MCF 10A (cell line): ENCODE measurements at regions of chr11 and their contacts with region 1.

Region 1: DNA sequence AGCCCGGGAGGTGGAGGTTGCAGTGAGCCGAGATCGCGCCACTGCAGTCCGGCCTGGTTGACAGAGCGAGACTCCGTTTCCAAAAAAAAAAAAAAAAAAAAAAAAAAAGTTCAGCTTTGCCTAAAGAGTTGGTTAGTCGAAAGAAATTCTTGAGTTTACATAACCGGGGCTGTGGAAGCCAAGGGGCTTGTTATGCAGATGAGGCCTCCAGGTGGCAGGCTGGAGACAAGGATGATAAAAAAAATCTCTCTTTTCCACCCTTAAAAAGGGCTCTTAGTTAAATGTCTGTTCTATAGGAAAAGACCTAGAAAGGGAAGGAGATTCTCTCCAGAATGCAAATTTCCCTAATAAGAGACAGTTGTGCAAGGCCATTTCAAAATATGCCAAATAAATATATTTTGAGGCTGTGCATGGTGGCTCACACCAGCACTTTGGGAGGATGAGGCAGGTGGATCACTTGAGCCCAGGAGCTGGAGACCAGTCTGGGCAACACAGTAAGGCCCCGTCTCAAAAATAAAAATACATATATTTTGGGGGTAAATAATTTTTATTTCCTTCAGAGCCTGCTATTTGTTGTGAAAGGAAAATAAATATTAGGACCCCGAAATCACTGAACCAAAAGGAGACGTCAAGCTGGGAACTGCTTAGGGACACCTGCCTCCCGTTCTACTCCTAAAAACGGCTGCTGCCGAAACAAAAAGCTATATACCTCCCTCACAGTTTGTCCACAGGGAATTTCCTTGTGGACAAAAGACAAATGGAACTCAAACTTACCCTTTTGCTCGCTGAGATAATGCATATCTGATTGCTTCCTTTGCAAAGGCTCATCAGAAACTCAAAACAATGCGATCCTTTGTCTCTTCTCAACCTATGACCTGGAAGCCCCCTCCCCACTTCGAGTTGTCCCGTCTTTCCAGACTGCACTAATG is 2.4 kb upstream of the IFITM2 start:
- DNase-seq: peak; percentile 74
- H3K4me3 Mint-ChIP-seq: no peak overlapping the region
- H3K27ac Mint-ChIP-seq: no peak overlapping the region
- H3K4me1 Mint-ChIP-seq: peaks cover 20% of the 10 kb centered on the region
- H3K27me3 Mint-ChIP-seq: no peaks in the 10 kb centered on the region
- CTCF ChIP-seq: peak; percentile 58

Region 2: GRCh38 chr11:330694-331357 is 25.6 kb after region 1 on chr11:
- CTCF ChIA-PET with region 1: interaction called, 3 read pairs
- POLR2A ChIA-PET with region 1: interaction called, 3 read pairs
- intact Hi-C with region 1: loop called (anchors 1 kb)
- DNase-seq: no peak
- H3K4me3 Mint-ChIP-seq: no peak overlapping the region
- H3K27ac Mint-ChIP-seq: no peak overlapping the region
- H3K4me1 Mint-ChIP-seq: no peaks in the 10 kb centered on the region
- H3K27me3 Mint-ChIP-seq: no peaks in the 10 kb centered on the region
- CTCF ChIP-seq: no peak

Region 3: GRCh38 chr11:403847-404431 is 98.8 kb after region 1 on chr11:
- CTCF ChIA-PET with region 1: no interaction called
- POLR2A ChIA-PET with region 1: no interaction called
- intact Hi-C with region 1: no loop called
- DNase-seq: no peak
- H3K4me3 Mint-ChIP-seq: no peak overlapping the region
- H3K27ac Mint-ChIP-seq: no peak overlapping the region
- H3K4me1 Mint-ChIP-seq: no peaks in the 10 kb centered on the region
- H3K27me3 Mint-ChIP-seq: no peaks in the 10 kb centered on the region
- CTCF ChIP-seq: no peak

Region 4: GRCh38 chr11:870127-870413 is 564.9 kb after region 1 on chr11:
- CTCF ChIA-PET with region 1: no interaction called
- POLR2A ChIA-PET with region 1: no interaction called
- intact Hi-C with region 1: no loop called
- DNase-seq: no peak
- H3K4me3 Mint-ChIP-seq: no peak overlapping the region
- H3K27ac Mint-ChIP-seq: no peak overlapping the region
- H3K4me1 Mint-ChIP-seq: no peaks in the 10 kb centered on the region
- H3K27me3 Mint-ChIP-seq: no peaks in the 10 kb centered on the region
- CTCF ChIP-seq: peak; percentile 9